ENCODE measurements at regions of chr11 and their contacts with region 1.

Region 1: GRCh38 chr11:18761741-18762140 is 29.9 kb downstream of the PTPN5 start:
- DNase-seq: no peak
- ATAC-seq: no peak
- H3K4me3 ChIP-seq: no peak overlapping the region
- H3K27ac ChIP-seq: no peak overlapping the region
- H3K4me1 ChIP-seq: peaks cover 16% of the 10 kb centered on the region
- H3K27me3 ChIP-seq: no peaks in the 10 kb centered on the region
- CTCF ChIP-seq: no peak

Region 2: DNA sequence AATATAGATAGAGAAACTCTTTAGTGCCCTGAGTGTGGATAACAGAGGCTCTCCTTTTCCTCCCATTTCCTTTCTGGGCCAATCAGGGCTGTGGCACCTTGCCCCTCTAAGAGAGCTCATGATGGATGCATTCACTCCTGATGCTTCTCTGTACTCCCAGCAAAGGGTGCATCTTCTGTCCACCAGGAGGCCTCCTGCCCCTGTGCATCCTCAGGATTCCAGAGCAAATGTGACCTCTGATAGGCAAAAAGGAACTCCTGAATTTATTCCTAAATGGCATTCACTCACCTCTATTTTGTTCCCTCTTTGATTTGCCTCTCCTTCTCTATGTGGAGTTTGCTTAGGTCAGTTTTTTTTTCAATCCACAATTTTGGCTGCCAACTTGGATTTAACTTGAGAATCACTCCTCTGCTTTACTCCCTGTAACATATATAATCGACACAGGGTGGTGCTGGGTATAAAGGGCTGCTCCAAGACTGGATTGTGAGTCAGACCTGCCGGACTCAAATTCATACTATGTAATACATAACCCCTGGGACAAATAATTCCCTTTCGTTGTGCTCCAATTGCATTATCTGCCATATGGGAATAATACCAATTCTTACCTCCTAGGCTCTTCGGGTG is 590.3 kb before region 1 on chr11:
- CTCF ChIA-PET with region 1: no interaction called
- POLR2A ChIA-PET with region 1: no interaction called
- intact Hi-C with region 1: loop called (anchors 5 kb)
- DNase-seq: peak; percentile 51
- ATAC-seq: peak; percentile 97
- H3K4me3 ChIP-seq: no peak overlapping the region
- H3K27ac ChIP-seq: no peak overlapping the region
- H3K4me1 ChIP-seq: no peaks in the 10 kb centered on the region
- H3K27me3 ChIP-seq: peaks cover 43% of the 10 kb centered on the region
- CTCF ChIP-seq: peak; percentile 74

Measured in PC-3 (cell line).